ENCODE measurements at regions of chr5 and their contacts with region 1.

Region 1: GRCh38 chr5:127757576-127757975 is 54.4 kb downstream of the CCDC192 start:
- DNase-seq: peak; percentile 15 to 45
- H3K4me3 ChIP-seq: no peak overlapping the region
- H3K27ac ChIP-seq: no peak overlapping the region
- H3K4me1 ChIP-seq: no peaks in the 10 kb centered on the region
- H3K27me3 ChIP-seq: no peaks in the 10 kb centered on the region
- CTCF ChIP-seq: peak; percentile 72

Region 2: DNA sequence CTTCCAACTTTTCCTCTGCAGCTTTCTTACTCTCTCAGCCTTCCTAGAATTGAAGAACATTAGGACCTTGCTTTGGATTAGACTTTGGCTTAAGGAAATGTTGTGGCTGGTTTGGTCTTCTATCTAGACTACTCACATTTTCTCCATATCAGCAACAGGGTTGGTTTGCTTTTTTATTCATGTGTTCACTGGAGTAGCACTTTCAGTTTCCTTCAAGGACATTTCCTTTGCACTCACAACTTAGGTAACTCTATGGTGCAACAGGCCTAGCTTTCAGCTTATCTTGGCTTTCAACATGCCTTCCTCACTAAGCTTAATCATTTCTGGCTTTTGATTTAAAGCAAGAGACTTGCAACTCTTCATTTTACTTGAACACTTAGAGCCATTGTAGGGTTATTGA is 98.7 kb after region 1 on chr5:
- CTCF ChIA-PET with region 1: no interaction called
- POLR2A ChIA-PET with region 1: no interaction called
- intact Hi-C with region 1: no loop called
- DNase-seq: no peak
- H3K4me3 ChIP-seq: no peak overlapping the region
- H3K27ac ChIP-seq: no peak overlapping the region
- H3K4me1 ChIP-seq: no peaks in the 10 kb centered on the region
- H3K27me3 ChIP-seq: no peaks in the 10 kb centered on the region
- CTCF ChIP-seq: no peak

Region 3: DNA sequence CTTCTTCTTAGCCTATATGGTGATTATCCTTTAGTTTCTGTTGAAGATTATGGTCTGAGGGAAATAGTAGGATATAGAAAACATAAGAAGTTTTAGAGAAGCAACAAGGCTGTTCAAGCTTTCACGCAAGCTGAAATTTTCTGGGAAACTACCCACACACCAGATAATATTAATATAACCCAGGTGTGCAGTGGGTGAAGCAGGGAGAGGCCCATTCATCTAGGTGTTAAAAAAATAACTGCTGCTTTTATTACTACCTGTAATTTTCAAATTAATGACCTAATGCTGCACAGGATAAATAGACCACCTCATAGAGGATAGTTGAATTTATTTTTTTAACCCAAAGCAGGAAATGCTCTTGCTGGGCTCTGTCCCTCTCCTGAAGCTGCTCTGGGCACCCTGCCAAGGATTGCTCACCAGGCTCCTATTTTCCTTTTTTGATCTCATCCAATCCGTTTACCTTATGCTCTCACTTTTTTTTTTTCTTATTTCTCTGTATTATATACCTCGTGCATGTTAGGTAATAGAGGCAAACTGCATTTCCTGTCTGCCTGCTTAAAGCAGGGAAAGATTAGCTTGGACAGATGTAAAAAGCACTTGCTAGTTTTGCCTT is 201.7 kb after region 1 on chr5:
- CTCF ChIA-PET with region 1: no interaction called
- POLR2A ChIA-PET with region 1: interaction called, 12 read pairs
- intact Hi-C with region 1: no loop called
- DNase-seq: peak; percentile 80 to 81
- H3K4me3 ChIP-seq: no peak overlapping the region
- H3K27ac ChIP-seq: peak overlapping the region; percentile 6
- H3K4me1 ChIP-seq: peaks cover 39% of the 10 kb centered on the region
- H3K27me3 ChIP-seq: no peaks in the 10 kb centered on the region
- CTCF ChIP-seq: no peak

Region 4: DNA sequence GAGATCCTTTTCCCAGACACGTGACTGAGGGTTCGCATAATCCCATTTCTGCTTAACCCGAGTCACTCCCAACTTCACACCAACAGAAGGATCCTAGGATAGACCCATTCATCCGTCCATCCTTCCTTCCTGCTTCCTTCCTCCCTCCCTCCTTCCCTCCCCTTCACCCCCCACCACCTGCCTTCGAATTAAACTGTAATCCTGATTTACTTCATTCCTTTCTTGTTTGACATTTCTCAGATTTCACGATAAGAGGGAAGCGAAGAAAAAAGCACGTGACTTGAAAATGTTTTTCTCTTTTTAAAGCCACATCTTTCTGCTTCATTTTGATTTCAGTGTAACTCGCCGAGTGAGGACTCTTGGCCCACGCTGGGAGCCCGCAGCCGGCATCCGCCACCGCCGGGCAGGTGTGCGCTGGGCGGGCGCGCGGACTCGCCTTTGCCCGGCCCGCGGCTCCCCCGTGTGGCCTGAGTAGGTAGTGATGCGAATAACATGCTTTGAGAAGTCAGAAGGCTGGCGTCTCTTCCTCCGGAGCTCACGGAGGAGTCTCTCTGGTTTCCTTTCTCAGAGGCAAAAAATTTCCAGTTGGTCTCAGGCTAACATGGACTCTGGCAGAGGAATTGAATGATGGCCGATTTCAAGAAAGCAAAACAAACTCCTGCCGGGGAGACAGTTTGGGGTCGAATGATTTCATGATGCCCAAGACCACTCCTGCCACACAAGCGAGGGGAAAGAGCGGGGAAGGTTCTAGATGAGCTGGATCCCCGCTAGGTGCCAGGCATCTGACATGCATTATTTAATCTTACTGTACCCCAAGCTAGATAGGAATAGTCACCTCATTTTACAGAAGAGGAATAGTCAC is 443.7 kb after region 1 on chr5:
- CTCF ChIA-PET with region 1: no interaction called
- POLR2A ChIA-PET with region 1: no interaction called
- intact Hi-C with region 1: loop called (anchors 1 kb)
- DNase-seq: peak; percentile 86 to 91
- H3K4me3 ChIP-seq: peak overlapping the region; percentile 44; the same call in 1 of the 2 replicates
- H3K27ac ChIP-seq: peak overlapping the region; percentile 99
- H3K4me1 ChIP-seq: peaks cover 50% of the 10 kb centered on the region
- H3K27me3 ChIP-seq: no peaks in the 10 kb centered on the region
- CTCF ChIP-seq: peak; percentile 90

Measured in PC-9 (cell line).